Left lung (tissue), 14 donors: ENCODE measurements at regions of chr14 and their contacts with region 1.

Region 1: DNA sequence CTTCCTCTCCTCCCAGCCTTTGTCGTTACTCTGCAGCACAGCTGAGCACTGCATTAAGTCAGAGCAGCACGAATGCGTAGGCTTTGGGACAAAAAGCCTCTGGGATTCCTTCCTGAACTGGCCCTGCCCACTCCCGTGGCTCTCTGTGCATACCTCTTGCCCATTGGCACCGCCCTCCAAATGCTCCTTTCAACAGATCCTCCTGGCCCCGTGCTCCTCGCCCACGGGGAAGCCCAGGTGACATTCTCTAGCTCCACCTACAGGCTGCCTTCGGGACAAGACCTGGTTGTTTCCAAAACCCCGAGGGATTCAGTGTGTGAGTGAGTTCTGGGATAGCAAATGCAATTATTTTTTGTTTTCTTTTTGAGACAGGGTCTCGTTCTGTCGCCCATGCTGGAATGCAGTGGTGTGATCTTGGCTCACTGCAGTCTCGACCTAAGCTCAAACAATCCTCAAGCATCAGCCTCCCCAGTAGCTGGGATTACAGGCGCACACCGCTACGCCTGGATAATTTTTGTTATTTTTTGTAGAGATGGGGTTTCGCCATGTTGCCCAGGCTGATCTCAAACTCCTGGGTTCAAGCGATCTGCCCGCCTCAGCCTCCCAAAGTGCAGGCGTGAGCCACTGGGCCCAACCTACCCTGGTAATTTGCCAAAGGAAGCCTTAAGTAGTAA is 17.9 kb upstream of the TDRD9 start:
- DNase-seq: peak; percentile 60 to 89 (median 88)
- ATAC-seq: peak; percentile 100
- H3K4me3 ChIP-seq: no peak overlapping the region
- H3K27ac ChIP-seq: no peak overlapping the region
- H3K4me1 ChIP-seq: peaks cover 0 to 11% of the 10 kb centered on the region in 2 donors
- H3K27me3 ChIP-seq: no peaks in the 10 kb centered on the region
- CTCF ChIP-seq: peak; percentile 63 to 69

Region 2: GRCh38 chr14:103808403-103809001 is 101.9 kb before region 1 on chr14:
- intact Hi-C with region 1: loop called in 1 of 2 experiments (anchors 10 kb)
- DNase-seq: peak in 3 of 4 donors; percentile 67 to 88 (median 69)
- ATAC-seq: peak; percentile 95
- H3K4me3 ChIP-seq: no peak overlapping the region
- H3K27ac ChIP-seq: no peak overlapping the region
- H3K4me1 ChIP-seq: peaks cover 0 to 5% of the 10 kb centered on the region in 2 donors
- H3K27me3 ChIP-seq: no peaks in the 10 kb centered on the region
- CTCF ChIP-seq: peak; percentile 82 to 91